ENCODE measurements at regions of chr17 and their contacts with region 1.

Region 1: GRCh38 chr17:6894206-6894528 is 62.6 kb upstream of the TEKT1 start:
- DNase-seq: peak; percentile 87
- ATAC-seq: peak; percentile 91
- H3K4me3 Mint-ChIP-seq: peak overlapping the region; percentile 73
- H3K27ac Mint-ChIP-seq: no peak overlapping the region
- H3K4me1 Mint-ChIP-seq: no peaks in the 10 kb centered on the region
- H3K27me3 Mint-ChIP-seq: peaks cover 55% of the 10 kb centered on the region
- CTCF ChIP-seq: peak; percentile 81

Region 2: DNA sequence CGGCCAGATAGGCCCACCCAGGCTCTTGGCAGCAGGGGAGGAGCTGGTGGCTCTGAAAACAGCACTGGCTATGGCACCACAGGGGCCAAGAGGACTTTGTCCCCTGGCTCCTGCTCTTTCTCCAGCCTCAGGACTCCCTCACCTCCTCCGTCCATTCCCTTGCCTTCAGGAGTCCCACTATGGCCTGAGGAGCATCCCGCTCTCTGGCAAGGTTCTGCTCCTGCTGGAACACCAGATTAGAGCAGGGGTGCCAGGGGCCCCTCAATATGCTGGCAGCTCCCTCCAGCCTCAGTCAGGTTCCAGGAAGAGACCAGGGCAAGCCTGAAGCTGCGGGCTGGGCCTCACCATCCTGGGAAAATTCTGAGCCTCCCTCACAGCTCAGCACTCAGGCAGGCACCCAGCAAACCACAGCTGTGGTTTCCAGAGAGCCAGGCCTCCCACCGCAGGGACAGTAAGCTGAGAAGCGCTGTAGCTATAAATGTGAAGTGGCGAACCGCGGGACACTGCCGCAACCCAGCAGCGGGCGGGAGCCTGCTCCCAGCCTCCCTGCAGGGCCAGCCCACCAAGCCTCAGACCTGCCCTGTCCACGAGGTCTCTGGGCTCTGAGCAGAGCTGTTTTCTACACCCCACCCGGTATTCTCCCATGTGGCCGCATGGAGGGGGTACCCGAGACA is 216.9 kb before region 1 on chr17:
- CTCF ChIA-PET with region 1: interaction called, 10 read pairs
- POLR2A ChIA-PET with region 1: no interaction called
- DNase-seq: no peak
- ATAC-seq: no peak
- H3K4me3 Mint-ChIP-seq: no peak overlapping the region
- H3K27ac Mint-ChIP-seq: no peak overlapping the region
- H3K4me1 Mint-ChIP-seq: no peaks in the 10 kb centered on the region
- H3K27me3 Mint-ChIP-seq: no peaks in the 10 kb centered on the region
- CTCF ChIP-seq: no peak

Region 3: GRCh38 chr17:6713130-6713917 is 180.8 kb before region 1 on chr17 and contains the start of gene SLC13A5:
- CTCF ChIA-PET with region 1: interaction called, 37 read pairs
- POLR2A ChIA-PET with region 1: no interaction called
- DNase-seq: peak; percentile 87
- ATAC-seq: peak; percentile 90
- H3K4me3 Mint-ChIP-seq: peak within 1 kb of the TSS; percentile 92
- H3K27ac Mint-ChIP-seq: no peak within 1 kb of the TSS
- H3K4me1 Mint-ChIP-seq: peaks cover 21% of the 10 kb centered on the region
- H3K27me3 Mint-ChIP-seq: peaks cover 63% of the 10 kb centered on the region
- CTCF ChIP-seq: peak; percentile 29; the same call in 1 of the 2 replicates
- total RNA-seq, gene SLC13A5: 1.6 to 2.3 TPM (median 1.8 TPM) in 3 replicates

Region 4: DNA sequence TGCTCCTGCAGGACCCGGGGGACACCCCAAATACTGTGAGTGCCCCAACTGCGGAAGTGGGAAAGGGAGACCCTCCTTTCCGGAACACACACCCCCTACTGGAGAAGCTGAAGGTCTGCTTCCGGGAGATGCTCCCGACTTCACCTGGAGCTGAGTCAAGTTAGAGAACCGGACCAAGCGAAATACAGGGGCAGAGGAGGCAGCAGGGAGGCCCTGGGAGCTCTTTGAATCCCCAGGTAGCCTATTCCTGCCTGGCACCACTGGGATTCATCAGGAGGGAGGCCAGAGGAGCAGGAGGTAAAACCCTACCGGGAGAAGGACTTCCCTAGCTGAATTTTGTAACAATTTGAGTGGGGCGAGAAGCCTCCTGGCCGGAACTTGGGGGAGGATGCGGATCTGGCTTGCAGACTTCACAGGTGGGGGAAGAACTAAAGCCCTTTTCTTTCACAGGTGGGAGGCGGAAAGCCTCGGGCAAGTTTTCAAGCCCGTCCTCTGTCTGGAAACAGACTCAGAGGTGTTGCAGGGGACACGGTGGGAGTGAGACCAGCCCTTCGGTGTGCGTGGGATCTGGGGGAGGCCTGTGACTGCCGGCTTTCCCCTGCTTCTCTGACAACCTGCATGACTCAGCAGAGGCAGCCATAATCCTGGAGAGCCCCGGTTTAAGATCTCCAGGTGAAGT is 40.3 kb before region 1 on chr17:
- CTCF ChIA-PET with region 1: interaction called, 22 read pairs
- POLR2A ChIA-PET with region 1: interaction called, 3 read pairs
- DNase-seq: peak; percentile 64
- ATAC-seq: peak; percentile 97
- H3K4me3 Mint-ChIP-seq: peak overlapping the region; percentile 78
- H3K27ac Mint-ChIP-seq: peak overlapping the region; percentile 66
- H3K4me1 Mint-ChIP-seq: peaks cover 23% of the 10 kb centered on the region
- H3K27me3 Mint-ChIP-seq: peaks cover 14% of the 10 kb centered on the region
- CTCF ChIP-seq: peak; percentile 72

Region 5: DNA sequence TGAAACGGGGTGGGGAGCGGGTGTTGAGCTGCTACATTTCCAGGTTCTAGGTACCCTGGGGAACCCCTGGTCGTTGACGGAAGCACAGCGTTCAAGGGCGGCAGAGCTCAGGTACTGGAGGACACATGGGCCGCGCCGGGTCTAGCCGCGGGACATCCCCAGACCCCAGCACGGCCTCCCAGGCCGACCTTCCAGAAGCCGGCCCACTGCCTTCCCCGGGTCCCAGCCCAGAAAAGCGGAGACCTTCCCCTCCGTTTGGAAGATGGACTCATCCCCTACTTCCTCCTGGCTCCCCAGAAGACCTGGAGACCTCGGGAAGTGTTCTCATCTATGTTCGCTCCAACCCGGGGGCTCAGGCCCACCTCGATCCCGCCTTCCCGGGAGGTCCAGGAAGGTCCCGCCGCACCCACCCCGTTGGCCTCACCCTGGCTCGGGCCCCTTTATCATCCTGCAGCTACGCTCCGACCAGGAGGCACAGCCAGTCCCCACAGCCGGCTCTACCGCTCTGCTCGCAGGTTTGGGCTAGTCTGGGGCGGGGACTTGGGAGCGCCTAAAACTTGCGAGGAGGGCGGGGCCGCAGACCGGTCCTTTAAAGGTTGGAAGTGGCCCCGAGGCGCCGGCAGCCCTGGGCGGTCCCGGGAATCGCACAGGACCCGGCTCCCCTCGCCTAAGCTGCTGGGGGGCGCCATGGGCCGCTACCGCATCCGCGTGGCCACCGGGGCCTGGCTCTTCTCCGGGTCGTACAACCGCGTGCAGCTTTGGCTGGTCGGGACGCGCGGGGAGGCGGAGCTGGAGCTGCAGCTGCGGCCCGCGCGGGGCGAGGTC is 101.5 kb after region 1 on chr17 and contains the start of gene ALOX12:
- CTCF ChIA-PET with region 1: interaction called, 14 read pairs
- POLR2A ChIA-PET with region 1: interaction called, 4 read pairs
- DNase-seq: peak; percentile 77
- ATAC-seq: peak; percentile 78
- H3K4me3 Mint-ChIP-seq: peak within 1 kb of the TSS; percentile 77
- H3K27ac Mint-ChIP-seq: no peak within 1 kb of the TSS
- H3K4me1 Mint-ChIP-seq: peaks cover 8% of the 10 kb centered on the region
- H3K27me3 Mint-ChIP-seq: peaks cover 55% of the 10 kb centered on the region
- CTCF ChIP-seq: no peak
- total RNA-seq, gene ALOX12: 1.6 to 1.9 TPM (median 1.9 TPM) in 3 replicates

Measured in WTC11 (cell line).